ENCODE measurements at regions of chr4 and their contacts with region 1.

Region 1: DNA sequence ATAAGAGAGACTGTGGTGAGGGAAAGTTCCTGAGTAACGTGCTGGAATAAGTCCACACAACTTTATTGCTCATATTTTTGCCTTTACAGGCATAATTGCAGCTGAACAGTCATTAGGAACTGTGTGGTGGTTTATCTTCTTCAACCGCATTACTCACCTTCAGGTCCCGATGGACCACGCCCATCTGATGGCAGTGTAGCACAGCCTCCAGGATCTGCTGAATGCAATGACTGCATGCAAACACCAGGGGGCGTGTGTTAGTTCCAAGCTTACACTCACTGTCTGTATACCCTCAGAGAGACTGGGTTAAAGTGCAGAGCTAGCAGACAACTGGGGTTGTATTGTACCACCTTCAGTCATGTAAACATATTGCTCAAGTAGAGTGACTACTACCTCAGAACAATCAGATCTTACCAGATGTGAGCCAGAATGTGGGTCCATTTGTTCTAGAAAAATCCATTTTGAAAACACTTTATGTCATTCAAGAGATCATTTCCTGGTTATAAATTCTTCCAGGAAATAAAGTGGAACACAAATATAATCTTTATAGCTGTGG is 214.0 kb downstream of the CAMK2D start:
- DNase-seq: peak; percentile 96
- ATAC-seq: peak; percentile 97
- H3K4me3 ChIP-seq: no peak overlapping the region
- H3K27ac ChIP-seq: peak overlapping the region; percentile 31; the same call in 1 of the 2 replicates
- H3K4me1 ChIP-seq: peaks cover 13% of the 10 kb centered on the region
- H3K27me3 ChIP-seq: no peaks in the 10 kb centered on the region
- CTCF ChIP-seq: peak; percentile 91

Region 2: DNA sequence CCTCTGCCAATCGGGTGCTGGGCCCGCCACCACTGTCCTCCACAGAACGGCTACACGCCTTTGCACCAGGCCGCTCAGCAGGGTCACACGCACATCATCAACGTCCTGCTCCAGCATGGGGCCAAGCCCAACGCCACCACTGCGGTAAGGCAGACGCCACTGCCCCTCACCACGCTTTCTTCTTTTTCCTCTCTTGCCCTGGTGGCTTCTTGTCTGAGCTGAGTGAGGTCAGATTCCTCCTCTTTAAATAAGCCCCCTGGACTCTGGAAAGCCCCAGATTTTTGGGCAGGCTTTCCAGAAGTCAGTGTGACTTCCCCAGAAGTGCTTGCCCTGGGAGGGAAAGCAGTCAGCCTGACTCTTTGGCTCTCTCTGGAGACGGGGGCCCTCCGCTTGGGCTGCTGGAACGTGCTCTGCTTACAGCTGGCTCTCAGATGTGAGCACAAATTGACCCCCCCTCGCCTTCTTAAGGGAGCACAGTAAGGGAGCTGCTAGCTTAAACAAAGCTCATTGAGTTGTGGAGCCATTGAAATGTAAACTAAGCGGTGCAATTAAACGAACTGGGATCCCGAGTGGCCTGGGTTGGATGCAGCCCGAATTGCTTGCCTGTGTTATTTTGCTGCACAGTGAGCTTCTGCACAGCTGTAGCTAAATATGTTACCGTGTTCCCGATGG is 255.1 kb before region 1 on chr4:
- CTCF ChIA-PET with region 1: interaction called, 3 read pairs
- POLR2A ChIA-PET with region 1: no interaction called
- intact Hi-C with region 1: loop called (anchors 10 kb)
- DNase-seq: no peak
- ATAC-seq: no peak
- H3K4me3 ChIP-seq: no peak overlapping the region
- H3K27ac ChIP-seq: no peak overlapping the region
- H3K4me1 ChIP-seq: no peaks in the 10 kb centered on the region
- H3K27me3 ChIP-seq: no peaks in the 10 kb centered on the region
- CTCF ChIP-seq: no peak

Region 3: GRCh38 chr4:113645771-113646441 is 98.3 kb after region 1 on chr4:
- CTCF ChIA-PET with region 1: no interaction called
- POLR2A ChIA-PET with region 1: no interaction called
- intact Hi-C with region 1: loop called (anchors 5 kb)
- DNase-seq: peak; percentile 89
- ATAC-seq: peak; percentile 95
- H3K4me3 ChIP-seq: peak overlapping the region; percentile 26; the same call in 1 of the 2 replicates
- H3K27ac ChIP-seq: peak overlapping the region; percentile 72
- H3K4me1 ChIP-seq: peaks cover 33% of the 10 kb centered on the region
- H3K27me3 ChIP-seq: no peaks in the 10 kb centered on the region
- CTCF ChIP-seq: no peak

Region 4: GRCh38 chr4:113893546-113893945 is 346.0 kb after region 1 on chr4:
- CTCF ChIA-PET with region 1: no interaction called
- POLR2A ChIA-PET with region 1: no interaction called
- intact Hi-C with region 1: loop called (anchors 1 kb)
- DNase-seq: peak; percentile 29
- ATAC-seq: no peak
- H3K4me3 ChIP-seq: no peak overlapping the region
- H3K27ac ChIP-seq: no peak overlapping the region
- H3K4me1 ChIP-seq: no peaks in the 10 kb centered on the region
- H3K27me3 ChIP-seq: no peaks in the 10 kb centered on the region
- CTCF ChIP-seq: peak; percentile 54

Region 5: DNA sequence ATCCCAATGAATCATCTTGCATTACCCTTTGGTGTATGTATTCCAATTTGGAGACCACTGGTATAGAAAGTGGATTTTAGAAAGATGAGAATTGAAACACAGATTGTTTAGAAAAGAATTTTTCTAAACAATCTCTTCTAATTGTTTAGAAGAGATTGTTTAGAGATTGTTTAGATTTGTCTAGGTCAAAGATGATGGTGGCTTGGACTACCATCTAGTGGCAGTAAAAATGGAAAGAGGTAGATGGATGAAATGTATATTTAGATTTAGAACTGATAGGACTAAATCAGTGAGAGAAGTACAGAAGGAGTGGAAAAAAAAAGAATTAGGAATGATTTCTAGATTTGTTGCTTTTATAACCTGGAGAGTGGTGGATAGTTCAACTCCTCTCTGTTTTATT is 361.3 kb after region 1 on chr4:
- CTCF ChIA-PET with region 1: no interaction called
- POLR2A ChIA-PET with region 1: no interaction called
- intact Hi-C with region 1: loop called (anchors 5 kb)
- DNase-seq: peak; percentile 6
- ATAC-seq: no peak; the same call in 1 of the 2 replicates
- H3K4me3 ChIP-seq: no peak overlapping the region
- H3K27ac ChIP-seq: no peak overlapping the region
- H3K4me1 ChIP-seq: no peaks in the 10 kb centered on the region
- H3K27me3 ChIP-seq: no peaks in the 10 kb centered on the region
- CTCF ChIP-seq: peak; percentile 49; the same call in 1 of the 2 replicates